ENCODE measurements at regions of chr9 and their contacts with region 1.

Region 1: DNA sequence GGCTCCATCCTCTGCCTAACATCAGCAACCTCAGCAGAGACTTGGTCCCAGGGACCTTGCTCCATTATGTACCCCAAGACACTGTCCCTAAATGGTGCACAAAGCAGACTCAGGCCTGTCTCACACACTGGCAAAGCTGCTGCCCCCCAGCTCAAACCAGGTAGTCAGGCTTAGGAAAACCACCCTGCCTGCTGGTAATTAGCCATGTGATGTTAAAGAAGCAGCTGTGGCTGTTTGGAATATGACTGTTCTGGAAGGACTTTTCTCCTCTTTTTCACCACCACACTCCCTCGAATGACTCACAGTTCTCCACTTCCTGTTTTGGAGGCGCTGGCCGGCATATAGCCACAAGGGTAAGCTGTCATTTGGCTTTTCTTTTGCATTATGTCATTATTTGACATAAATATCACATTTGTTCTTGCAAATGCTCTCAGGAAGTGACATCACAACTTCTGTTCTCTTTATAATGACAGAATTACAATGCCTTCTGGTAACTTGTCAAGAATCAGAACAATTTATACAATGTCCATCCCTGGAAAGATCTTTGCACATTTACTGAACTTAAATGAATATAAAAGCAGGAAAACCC is 113.9 kb downstream of the SUSD1 start:
- DNase-seq: peak; percentile 97
- H3K4me3 ChIP-seq: no peak overlapping the region
- H3K27ac ChIP-seq: peak overlapping the region; percentile 82
- H3K4me1 ChIP-seq: peaks cover 47% of the 10 kb centered on the region
- H3K27me3 ChIP-seq: no peaks in the 10 kb centered on the region
- CTCF ChIP-seq: no peak

Region 2: GRCh38 chr9:111957856-111958652 is 103.2 kb before region 1 on chr9:
- CTCF ChIA-PET with region 1: no interaction called
- dilution Hi-C with region 1: no loop called
- in situ Hi-C with region 1: loop called in 1 of 2 experiments (anchors 25 kb)
- intact Hi-C with region 1: loop called (anchors 1 kb)
- DNase-seq: peak; percentile 96
- H3K4me3 ChIP-seq: peak overlapping the region; percentile 0 to 14 (median 10)
- H3K27ac ChIP-seq: peak overlapping the region; percentile 96
- H3K4me1 ChIP-seq: peaks cover 43% of the 10 kb centered on the region
- H3K27me3 ChIP-seq: no peaks in the 10 kb centered on the region
- CTCF ChIP-seq: no peak

Region 3: DNA sequence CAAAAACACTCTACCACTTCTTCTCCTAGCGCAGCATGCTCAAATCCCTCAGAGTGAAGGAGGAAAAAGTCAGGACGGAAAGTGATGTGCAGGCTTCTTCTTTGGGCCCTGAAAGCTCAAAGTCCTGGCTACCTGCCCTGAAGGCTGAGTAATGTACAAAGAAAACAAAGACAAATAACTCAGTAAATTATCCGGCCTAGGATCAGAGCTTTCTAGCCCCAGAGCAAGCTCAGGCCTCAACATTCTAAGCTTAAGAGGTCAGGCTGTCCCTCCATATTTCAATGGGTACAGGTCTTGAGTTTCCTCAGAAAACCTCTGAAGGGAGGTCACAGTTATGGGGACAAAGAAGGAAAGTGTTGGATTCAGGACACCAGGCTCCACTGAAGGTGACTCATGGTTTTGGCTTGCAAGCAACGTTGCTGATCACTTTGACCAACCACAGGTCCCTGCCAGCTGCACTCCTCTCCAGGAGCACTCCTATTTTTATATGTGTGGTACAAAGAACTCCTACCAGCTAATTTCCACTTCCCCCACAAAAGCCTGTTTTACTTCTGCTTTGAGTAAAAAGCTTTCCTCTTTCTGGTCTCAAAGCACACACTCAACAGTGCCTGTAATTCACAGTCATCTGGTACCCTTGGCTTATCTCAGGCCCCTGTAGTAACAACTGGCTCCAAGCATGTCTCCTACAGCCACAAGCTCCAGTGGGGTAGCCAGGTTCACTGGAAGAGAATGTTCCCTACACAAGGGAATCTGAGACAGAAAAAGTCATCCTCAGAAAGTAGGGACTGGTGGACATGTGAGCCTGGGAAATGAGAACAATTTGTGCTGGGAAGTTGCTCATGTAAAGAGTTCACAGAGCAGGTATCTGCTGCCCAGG is 49.0 kb before region 1 on chr9:
- CTCF ChIA-PET with region 1: no interaction called
- dilution Hi-C with region 1: no loop called
- in situ Hi-C with region 1: no loop called
- intact Hi-C with region 1: loop called (anchors 5 kb)
- DNase-seq: peak; percentile 91
- H3K4me3 ChIP-seq: no peak overlapping the region
- H3K27ac ChIP-seq: peak overlapping the region; percentile 98
- H3K4me1 ChIP-seq: peaks cover 24% of the 10 kb centered on the region
- H3K27me3 ChIP-seq: no peaks in the 10 kb centered on the region
- CTCF ChIP-seq: no peak

Region 4: DNA sequence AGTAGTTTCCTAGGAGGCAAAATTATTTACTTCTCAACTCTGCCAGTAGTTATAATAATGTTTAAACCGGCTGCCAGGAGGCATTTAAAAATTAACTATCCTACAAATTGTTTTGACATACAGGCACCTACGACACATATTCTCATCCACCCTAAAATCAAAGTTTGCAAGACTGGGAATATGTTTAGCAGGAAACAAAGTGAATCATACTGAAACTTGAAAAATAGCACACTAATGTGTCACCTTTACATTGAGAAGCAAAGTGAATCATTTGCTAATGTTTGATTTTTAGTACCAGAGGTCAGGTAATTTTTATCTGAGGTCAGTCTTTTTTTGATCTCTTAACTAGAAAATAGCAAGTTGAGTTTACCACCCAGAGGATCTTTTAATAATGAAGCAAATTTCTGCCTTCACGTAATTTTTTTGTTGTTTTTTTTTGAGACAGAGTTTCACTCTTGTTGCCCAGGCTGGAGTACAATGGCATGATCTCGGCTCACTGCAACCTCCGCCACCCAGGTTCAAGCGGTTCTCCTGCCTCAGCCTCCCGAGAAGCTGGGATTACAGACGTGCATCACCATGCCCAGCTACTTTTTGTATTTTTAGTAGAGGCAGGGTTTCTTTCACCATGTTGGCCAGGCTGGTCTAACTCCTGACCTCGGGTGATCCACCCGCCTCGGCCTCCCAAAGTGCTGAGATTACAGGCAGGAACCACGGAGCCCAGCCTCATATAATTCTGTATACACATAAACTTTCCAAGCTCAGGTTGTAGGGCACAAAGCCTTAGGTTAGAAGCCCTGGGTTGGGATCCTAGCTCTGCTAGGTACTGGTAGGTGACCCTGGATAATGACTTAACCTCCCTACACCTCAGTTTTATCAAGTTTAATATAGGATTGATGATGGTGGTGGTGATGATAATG is 40.3 kb before region 1 on chr9:
- CTCF ChIA-PET with region 1: no interaction called
- dilution Hi-C with region 1: no loop called
- in situ Hi-C with region 1: no loop called
- intact Hi-C with region 1: loop called (anchors 2 kb)
- DNase-seq: peak; percentile 89
- H3K4me3 ChIP-seq: no peak overlapping the region
- H3K27ac ChIP-seq: peak overlapping the region; percentile 89
- H3K4me1 ChIP-seq: peaks cover 14% of the 10 kb centered on the region
- H3K27me3 ChIP-seq: no peaks in the 10 kb centered on the region
- CTCF ChIP-seq: no peak

Region 5: DNA sequence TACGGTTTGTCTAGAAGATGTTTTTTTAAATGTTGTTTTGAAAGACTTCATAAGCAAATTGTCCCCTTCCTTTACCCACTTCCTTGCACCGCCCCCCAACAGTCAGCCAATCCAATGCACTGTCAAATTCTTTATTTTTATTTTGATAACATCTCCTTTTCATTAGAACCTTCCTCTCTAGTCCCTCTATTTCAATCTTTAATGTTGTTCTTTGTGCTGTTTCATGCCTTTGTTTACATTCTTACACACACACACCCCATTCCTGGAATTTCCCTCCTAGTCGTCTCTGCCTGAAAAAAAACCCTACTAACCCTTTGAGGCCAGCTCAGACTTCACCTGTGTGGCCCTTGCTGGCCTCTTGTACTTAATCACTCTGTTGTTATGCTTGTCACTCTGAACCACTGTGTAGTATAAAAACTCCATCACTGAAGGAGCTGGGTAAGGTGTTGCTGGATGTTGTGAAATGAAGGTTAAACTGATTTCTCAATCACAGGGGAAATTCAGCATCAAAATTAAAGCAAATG is 31.3 kb before region 1 on chr9:
- CTCF ChIA-PET with region 1: interaction called, 3 read pairs
- dilution Hi-C with region 1: no loop called
- in situ Hi-C with region 1: no loop called
- intact Hi-C with region 1: loop called (anchors 1 kb)
- DNase-seq: peak; percentile 98
- H3K4me3 ChIP-seq: no peak overlapping the region
- H3K27ac ChIP-seq: peak overlapping the region; percentile 82
- H3K4me1 ChIP-seq: peaks cover 12% of the 10 kb centered on the region
- H3K27me3 ChIP-seq: no peaks in the 10 kb centered on the region
- CTCF ChIP-seq: no peak

Region 6: GRCh38 chr9:112041536-112042243 is 19.6 kb before region 1 on chr9:
- CTCF ChIA-PET with region 1: no interaction called
- dilution Hi-C with region 1: no loop called
- in situ Hi-C with region 1: no loop called
- intact Hi-C with region 1: loop called (anchors 1 kb)
- DNase-seq: peak; percentile 99
- H3K4me3 ChIP-seq: no peak overlapping the region
- H3K27ac ChIP-seq: peak overlapping the region; percentile 52
- H3K4me1 ChIP-seq: peaks cover 60% of the 10 kb centered on the region
- H3K27me3 ChIP-seq: no peaks in the 10 kb centered on the region
- CTCF ChIP-seq: no peak

Measured in mammary epithelial cell (primary cell).